ENCODE measurements at regions of chr7 and their contacts with region 1.

Region 1: DNA sequence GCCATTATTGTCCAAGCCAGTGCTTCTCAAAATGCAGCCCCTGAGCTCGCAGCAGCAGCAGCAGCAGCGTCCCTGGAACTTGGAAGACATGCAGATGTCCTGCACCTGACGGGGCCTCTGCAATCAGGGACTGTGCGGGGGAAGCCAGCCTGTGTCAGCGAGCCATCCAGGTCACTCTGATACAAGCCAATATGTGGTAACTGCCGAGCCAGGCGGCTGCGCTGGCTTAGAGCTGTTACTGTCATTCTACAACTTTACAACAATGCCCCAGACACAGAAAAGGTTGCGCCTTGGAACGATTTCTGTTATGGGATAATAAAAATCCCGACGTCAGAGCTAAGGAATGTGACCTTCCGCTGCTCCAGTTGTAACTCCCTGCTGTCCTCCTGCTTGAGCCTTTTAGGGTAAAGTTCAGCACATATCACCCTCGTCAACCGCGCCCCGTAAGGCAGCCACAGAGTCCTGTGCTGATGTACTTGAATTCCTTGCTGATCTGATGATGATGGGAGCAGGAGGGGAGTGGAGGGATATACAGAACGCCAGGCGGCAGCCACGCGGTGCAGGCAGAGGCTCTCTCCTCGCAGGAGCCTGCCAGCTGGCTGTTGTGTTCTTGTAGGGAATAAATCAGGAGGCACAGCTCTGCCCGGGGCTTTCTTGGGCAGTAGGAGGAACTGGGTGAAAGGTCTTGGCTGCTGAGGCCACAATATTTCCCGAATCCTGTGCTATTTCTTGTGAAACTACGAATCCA is 20.0 kb upstream of the CRYGN start:
- DNase-seq: peak; percentile 86
- ATAC-seq: peak; percentile 84 to 91

Region 2: DNA sequence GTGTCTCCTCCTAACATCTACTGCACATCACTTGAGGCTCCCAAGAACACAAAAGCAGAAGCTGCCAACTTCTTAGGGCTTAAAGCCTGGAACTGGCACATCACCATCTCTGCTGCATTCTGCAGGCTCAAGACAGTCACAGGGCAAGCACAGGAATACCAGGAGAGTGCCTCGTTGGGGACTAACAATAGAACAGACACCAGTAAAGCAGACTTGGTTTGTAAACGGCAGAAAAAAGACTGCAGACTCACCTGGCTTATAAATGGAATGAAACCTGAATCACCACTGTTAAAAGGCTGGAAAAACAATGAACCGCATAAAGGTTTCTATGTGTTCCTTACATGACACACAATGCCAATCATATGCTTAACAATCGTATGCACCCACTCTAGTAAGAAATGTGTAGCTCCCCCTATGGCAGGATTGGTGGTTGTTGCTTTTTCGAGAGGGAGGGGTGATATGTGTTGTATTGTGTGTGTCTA is 47.0 kb after region 1 on chr7:
- intact Hi-C with region 1: no loop called
- DNase-seq: no peak
- ATAC-seq: peak in 1 of 2 donors; percentile 14

Region 3: DNA sequence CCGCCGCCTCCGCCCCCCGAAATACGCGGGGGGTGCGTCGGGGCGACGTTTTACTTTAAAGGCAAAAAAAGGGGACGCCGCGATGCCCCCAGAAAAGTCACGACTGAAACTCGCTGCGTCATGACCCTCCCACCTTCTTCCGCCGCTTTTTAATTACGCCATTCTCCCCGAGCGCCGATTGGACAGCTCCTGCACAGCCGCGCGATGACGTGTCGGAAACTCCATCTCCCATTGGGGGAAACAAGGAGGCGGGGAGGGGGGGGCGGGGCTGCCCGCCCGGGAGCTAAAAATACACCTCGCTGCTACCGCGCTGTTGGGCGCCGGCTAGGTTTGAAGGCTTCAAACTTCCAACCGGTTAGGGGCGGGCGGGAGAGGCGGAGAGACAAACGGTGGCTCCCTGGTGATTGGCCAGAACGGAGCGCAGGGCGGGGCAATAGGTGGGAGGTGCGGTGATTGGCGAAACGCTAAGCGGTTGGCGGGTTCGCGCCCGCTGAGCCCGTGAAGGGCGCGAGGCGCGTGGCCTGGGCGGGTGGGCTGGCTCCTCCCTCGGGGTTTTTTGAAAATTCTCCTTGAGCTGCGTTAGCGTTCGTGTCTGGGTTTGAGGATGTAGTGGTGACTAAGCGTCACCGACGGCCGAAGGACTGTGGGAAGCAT is 60.0 kb after region 1 on chr7 and contains the start of gene RHEB:
- intact Hi-C with region 1: loop called in 1 of 2 experiments (anchors 2 kb)
- DNase-seq: peak; percentile 98
- ATAC-seq: peak; percentile 94 to 97
- total RNA-seq, gene RHEB: 110 to 180 TPM

Region 4: GRCh38 chr7:151754142-151754590 is 294.3 kb after region 1 on chr7:
- intact Hi-C with region 1: loop called (anchors 5 to 10 kb)
- DNase-seq: peak; percentile 85
- ATAC-seq: peak; percentile 93 to 94

Region 5: GRCh38 chr7:151759591-151760042 is 299.7 kb after region 1 on chr7:
- intact Hi-C with region 1: loop called (anchors 5 to 10 kb)
- DNase-seq: peak; percentile 65
- ATAC-seq: peak; percentile 45 to 59

Measured in left cardiac atrium (tissue), 4 donors.